ENCODE measurements at regions of chr6 and their contacts with region 1.

Region 1: DNA sequence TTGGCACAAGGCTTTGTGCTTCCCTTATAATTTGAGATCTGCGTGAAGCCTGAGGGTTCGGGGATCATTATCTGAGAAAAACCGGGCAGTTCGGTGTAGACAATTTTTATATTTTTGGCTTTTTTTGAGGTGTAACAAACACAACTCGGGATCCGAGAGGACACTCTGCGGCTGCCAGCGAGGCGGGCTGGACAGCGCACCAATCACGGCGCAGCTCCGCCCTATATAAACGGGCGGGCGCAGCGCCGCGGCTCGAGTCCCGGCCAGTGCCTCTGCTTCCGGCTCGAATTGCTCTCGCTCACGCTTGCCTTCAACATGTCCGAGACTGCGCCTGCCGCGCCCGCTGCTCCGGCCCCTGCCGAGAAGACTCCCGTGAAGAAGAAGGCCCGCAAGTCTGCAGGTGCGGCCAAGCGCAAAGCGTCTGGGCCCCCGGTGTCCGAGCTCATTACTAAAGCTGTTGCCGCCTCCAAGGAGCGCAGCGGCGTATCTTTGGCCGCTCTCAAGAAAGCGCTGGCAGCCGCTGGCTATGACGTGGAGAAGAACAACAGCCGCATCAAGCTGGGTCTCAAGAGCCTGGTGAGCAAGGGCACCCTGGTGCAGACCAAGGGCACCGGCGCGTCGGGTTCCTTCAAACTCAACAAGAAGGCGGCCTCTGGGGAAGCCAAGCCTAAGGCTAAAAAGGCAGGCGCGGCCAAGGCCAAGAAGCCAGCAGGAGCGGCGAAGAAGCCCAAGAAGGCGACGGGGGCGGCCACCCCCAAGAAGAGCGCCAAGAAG is 69.0 kb downstream of the HFE start:
- DNase-seq: peak; percentile 91
- H3K4me3 Mint-ChIP-seq: peak overlapping the region; percentile 82
- H3K27ac Mint-ChIP-seq: peak overlapping the region; percentile 64
- H3K4me1 Mint-ChIP-seq: peaks cover 23% of the 10 kb centered on the region
- H3K27me3 Mint-ChIP-seq: no peaks in the 10 kb centered on the region
- CTCF ChIP-seq: no peak

Region 2: GRCh38 chr6:24274441-24275083 is 1881.7 kb before region 1 on chr6:
- CTCF ChIA-PET with region 1: no interaction called
- POLR2A ChIA-PET with region 1: no interaction called
- intact Hi-C with region 1: no loop called
- DNase-seq: peak; percentile 35
- H3K4me3 Mint-ChIP-seq: no peak overlapping the region
- H3K27ac Mint-ChIP-seq: no peak overlapping the region
- H3K4me1 Mint-ChIP-seq: peaks cover 9% of the 10 kb centered on the region
- H3K27me3 Mint-ChIP-seq: peaks cover 14% of the 10 kb centered on the region
- CTCF ChIP-seq: peak; percentile 52

Region 3: DNA sequence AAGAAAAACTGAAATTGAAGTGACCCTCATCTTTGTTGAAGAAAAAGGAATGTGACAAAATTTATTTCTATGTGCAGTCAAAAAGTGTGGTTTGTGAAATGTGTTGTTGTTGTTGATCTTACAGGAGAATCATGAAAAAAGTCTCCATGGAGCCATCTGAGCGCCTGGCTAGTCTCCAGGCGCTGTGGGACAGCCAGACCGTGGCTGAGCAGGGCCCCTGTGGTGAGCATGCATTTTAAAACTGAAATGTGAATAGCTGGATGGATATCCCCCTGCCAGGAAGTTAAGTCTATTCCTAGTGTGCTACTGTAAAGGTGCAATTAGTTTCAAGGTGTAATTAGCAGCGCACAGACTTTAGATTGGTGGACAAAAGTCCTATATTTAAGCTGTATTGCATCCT is 706.5 kb before region 1 on chr6:
- CTCF ChIA-PET with region 1: no interaction called
- POLR2A ChIA-PET with region 1: no interaction called
- intact Hi-C with region 1: no loop called
- DNase-seq: no peak
- H3K4me3 Mint-ChIP-seq: no peak overlapping the region
- H3K27ac Mint-ChIP-seq: no peak overlapping the region
- H3K4me1 Mint-ChIP-seq: peaks cover 20% of the 10 kb centered on the region
- H3K27me3 Mint-ChIP-seq: no peaks in the 10 kb centered on the region
- CTCF ChIP-seq: no peak

Region 4: DNA sequence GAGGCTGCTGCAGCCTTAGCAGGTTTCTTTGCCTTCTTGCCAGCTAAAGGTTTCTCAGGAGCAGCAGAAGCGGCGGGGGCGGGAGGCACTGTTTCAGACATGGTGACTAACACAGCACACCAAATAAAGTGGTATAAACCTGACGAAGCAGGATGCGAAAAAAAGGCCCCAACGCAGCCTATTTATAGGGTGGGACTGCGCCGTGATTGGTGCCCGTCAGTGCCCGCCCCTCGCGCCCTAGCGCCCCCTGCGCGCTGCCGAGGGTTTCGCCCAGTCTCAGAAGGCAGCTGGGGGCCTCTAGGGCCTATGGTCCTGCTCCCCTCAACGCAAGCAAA is 138.7 kb before region 1 on chr6:
- CTCF ChIA-PET with region 1: no interaction called
- POLR2A ChIA-PET with region 1: interaction called, 83 read pairs
- intact Hi-C with region 1: no loop called
- DNase-seq: peak; percentile 93
- H3K4me3 Mint-ChIP-seq: peak overlapping the region; percentile 75
- H3K27ac Mint-ChIP-seq: peak overlapping the region; percentile 73
- H3K4me1 Mint-ChIP-seq: no peaks in the 10 kb centered on the region
- H3K27me3 Mint-ChIP-seq: no peaks in the 10 kb centered on the region
- CTCF ChIP-seq: peak; percentile 26

Region 5: DNA sequence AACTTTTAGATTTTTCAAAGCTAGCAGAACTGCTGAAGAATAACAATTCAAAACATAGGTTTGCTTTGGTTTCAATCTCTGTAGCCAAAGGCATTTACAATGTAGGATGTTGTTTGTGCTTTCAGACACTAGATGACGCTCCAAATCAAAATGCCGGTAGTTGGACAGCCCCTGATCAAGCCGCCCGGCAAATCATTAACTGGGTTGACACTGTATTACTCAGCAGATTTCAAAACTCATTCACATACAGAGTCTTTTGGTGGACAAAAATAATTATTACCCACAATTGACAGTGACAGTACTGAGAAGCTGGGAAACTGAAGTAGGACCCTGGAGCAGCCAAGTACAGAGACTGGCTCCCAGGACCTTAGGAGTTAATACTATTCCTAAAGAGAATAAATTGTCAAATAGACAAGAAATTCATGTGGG is 90.3 kb before region 1 on chr6:
- CTCF ChIA-PET with region 1: interaction called, 5 read pairs
- POLR2A ChIA-PET with region 1: interaction called, 54 read pairs
- intact Hi-C with region 1: no loop called
- DNase-seq: peak; percentile 87
- H3K4me3 Mint-ChIP-seq: no peak overlapping the region
- H3K27ac Mint-ChIP-seq: peak overlapping the region; percentile 23
- H3K4me1 Mint-ChIP-seq: no peaks in the 10 kb centered on the region
- H3K27me3 Mint-ChIP-seq: no peaks in the 10 kb centered on the region
- CTCF ChIP-seq: peak; percentile 81

Region 6: GRCh38 chr6:26183581-26184366 is 27.5 kb after region 1 on chr6:
- CTCF ChIA-PET with region 1: interaction called, 3 read pairs
- POLR2A ChIA-PET with region 1: interaction called, 1,160 read pairs
- intact Hi-C with region 1: loop called (anchors 2 kb)
- DNase-seq: peak; percentile 56
- H3K4me3 Mint-ChIP-seq: peak overlapping the region; percentile 79
- H3K27ac Mint-ChIP-seq: peak overlapping the region; percentile 84
- H3K4me1 Mint-ChIP-seq: peaks cover 27% of the 10 kb centered on the region
- H3K27me3 Mint-ChIP-seq: no peaks in the 10 kb centered on the region
- CTCF ChIP-seq: no peak

Region 7: DNA sequence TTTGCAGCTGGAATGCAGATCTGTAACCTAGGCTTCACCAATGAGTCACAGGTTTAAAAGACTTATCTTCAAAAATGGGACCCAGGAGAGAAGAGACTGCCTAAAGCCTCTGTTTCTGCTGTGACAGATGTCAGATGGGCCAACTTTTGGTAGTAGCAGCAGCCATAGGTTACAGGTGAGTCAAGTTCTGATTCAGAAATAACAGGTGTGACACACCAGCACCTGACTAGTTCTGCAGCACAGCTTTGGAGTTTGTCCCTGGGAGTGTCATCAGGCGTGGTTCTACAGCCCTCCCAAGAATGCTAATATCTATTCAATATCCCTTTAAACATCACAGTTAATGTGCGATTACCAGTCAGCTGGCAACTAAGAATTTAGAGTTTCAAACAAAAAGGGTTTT is 86.9 kb after region 1 on chr6:
- CTCF ChIA-PET with region 1: no interaction called
- POLR2A ChIA-PET with region 1: interaction called, 47 read pairs
- intact Hi-C with region 1: no loop called
- DNase-seq: peak; percentile 14
- H3K4me3 Mint-ChIP-seq: no peak overlapping the region
- H3K27ac Mint-ChIP-seq: no peak overlapping the region
- H3K4me1 Mint-ChIP-seq: no peaks in the 10 kb centered on the region
- H3K27me3 Mint-ChIP-seq: no peaks in the 10 kb centered on the region
- CTCF ChIP-seq: no peak

Region 8: GRCh38 chr6:26411751-26412150 is 255.5 kb after region 1 on chr6:
- CTCF ChIA-PET with region 1: no interaction called
- POLR2A ChIA-PET with region 1: no interaction called
- intact Hi-C with region 1: no loop called
- DNase-seq: no peak
- H3K4me3 Mint-ChIP-seq: no peak overlapping the region
- H3K27ac Mint-ChIP-seq: no peak overlapping the region
- H3K4me1 Mint-ChIP-seq: no peaks in the 10 kb centered on the region
- H3K27me3 Mint-ChIP-seq: no peaks in the 10 kb centered on the region
- CTCF ChIP-seq: peak; percentile 15

Region 9: DNA sequence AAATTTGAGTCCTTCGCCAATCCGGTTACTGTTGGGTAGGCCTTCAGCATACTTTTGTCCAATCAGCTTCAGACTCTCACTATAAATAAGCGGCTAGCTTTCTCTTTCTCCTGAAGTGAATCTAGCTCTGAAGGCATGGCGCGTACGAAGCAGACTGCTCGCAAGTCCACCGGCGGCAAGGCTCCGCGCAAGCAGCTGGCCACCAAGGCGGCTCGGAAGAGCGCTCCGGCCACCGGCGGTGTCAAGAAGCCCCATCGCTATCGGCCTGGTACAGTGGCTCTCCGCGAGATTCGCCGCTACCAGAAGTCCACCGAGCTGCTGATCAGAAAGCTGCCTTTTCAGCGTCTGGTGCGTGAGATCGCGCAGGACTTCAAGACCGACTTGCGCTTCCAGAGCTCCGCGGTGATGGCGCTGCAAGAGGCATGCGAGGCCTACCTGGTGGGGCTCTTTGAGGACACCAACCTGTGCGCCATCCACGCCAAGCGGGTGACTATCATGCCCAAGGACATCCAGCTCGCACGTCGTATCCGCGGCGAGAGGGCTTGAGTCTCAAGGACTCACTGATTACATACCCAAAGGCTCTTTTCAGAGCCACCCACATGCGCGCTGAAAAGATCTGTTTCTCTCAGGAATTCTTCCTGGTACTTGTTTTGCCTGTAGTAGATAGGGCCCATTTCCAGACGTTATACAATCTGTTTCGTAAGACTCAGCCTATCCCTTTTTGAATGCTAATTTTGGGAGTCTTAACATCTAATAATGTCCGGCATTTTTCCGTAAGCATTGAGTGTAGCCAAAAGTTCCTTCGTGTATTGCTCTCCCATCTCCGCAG is 1653.9 kb after region 1 on chr6:
- CTCF ChIA-PET with region 1: interaction called, 3 read pairs
- POLR2A ChIA-PET with region 1: interaction called, 178 read pairs
- intact Hi-C with region 1: no loop called
- DNase-seq: peak; percentile 96
- H3K4me3 Mint-ChIP-seq: peak overlapping the region; percentile 86
- H3K27ac Mint-ChIP-seq: peak overlapping the region; percentile 94
- H3K4me1 Mint-ChIP-seq: peaks cover 20% of the 10 kb centered on the region
- H3K27me3 Mint-ChIP-seq: no peaks in the 10 kb centered on the region
- CTCF ChIP-seq: no peak

Region 10: GRCh38 chr6:27893059-27893835 is 1737.0 kb after region 1 on chr6:
- CTCF ChIA-PET with region 1: no interaction called
- POLR2A ChIA-PET with region 1: interaction called, 63 read pairs
- intact Hi-C with region 1: no loop called
- DNase-seq: peak; percentile 98
- H3K4me3 Mint-ChIP-seq: no peak overlapping the region
- H3K27ac Mint-ChIP-seq: no peak overlapping the region
- H3K4me1 Mint-ChIP-seq: peaks cover 12% of the 10 kb centered on the region
- H3K27me3 Mint-ChIP-seq: no peaks in the 10 kb centered on the region
- CTCF ChIP-seq: no peak

Measured in MCF 10A (cell line).